WTC11 (cell line): ENCODE measurements at regions of chr6 and their contacts with region 1.

Region 1: DNA sequence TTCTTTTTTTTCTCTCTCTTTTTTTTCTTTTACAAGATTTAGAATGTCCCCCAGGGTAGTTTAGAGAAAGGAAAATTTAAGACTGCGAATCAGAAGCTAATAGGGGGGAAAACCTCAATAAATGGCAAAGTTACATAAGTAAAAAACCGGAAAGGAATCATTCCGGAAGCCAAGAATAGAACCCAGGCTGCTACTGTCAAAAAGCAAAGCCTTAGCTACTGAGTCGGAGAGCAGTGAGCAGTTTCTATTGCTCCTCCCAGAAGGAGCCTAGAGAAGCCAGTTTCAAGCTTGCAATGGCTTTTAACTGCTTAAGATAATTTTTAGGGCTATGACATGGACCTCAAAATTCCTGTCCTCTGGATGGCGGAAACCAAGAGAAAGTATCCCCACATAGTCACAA is 31.6 kb downstream of the SAMD5 start:
- DNase-seq: no peak
- ATAC-seq: no peak
- H3K4me3 Mint-ChIP-seq: no peak overlapping the region
- H3K27ac Mint-ChIP-seq: no peak overlapping the region
- H3K4me1 Mint-ChIP-seq: no peaks in the 10 kb centered on the region
- H3K27me3 Mint-ChIP-seq: peaks cover 3% of the 10 kb centered on the region; the same call in 1 of the 2 replicates
- CTCF ChIP-seq: no peak

Region 2: DNA sequence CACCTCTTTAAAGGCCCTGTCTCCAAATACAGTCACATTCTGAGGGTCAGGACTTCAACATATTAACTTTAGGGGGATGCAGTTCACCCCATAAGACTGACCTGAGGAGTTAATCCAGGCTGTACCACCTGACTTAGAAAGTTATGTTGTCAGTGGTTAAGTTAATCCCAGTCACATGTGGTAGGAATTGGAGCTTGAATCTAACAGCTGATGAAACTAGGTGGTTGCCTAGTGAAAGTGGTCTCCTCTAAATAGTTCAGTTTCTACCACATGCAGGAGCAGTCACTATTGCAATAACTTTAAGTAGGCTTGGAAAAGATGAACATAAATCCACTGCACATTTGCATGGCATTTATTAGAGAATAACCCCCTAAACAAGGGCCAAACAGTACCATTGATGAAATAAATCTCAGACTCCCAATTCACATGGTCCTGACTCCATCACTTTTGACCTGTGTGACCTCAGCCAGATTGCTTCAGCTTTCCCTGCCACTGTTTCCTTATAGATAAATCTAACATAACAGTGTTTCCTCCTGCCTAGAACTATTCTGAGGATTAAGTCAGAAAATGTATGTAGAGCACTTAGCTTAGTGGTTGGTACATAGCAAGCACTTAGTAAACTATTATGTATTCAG is 11.4 kb before region 1 on chr6:
- CTCF ChIA-PET with region 1: no interaction called
- POLR2A ChIA-PET with region 1: no interaction called
- DNase-seq: no peak
- ATAC-seq: no peak
- H3K4me3 Mint-ChIP-seq: no peak overlapping the region
- H3K27ac Mint-ChIP-seq: no peak overlapping the region
- H3K4me1 Mint-ChIP-seq: peaks cover 3% of the 10 kb centered on the region; the same call in 1 of the 2 replicates
- H3K27me3 Mint-ChIP-seq: no peaks in the 10 kb centered on the region
- CTCF ChIP-seq: no peak

Region 3: DNA sequence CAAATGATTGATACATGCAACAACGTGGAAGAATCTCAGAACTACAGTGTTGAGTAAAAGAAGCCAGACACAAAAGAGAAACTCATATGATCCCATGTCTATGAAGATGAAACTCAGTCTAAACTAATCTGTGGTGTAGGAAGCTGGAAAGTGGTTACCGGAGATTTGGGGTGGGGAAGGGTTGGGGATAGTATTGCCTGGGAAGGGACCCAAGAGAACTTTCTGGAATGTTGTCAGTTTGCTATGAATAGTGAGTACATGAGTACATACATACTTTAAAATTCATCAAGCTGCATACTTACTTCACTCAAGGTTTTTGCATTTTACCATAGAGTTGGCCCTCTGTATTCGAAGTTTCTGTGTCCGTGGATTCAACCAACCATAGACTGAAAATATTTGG is 74.4 kb after region 1 on chr6:
- CTCF ChIA-PET with region 1: no interaction called
- POLR2A ChIA-PET with region 1: interaction called, 11 read pairs
- DNase-seq: no peak
- ATAC-seq: no peak
- H3K4me3 Mint-ChIP-seq: no peak overlapping the region
- H3K27ac Mint-ChIP-seq: no peak overlapping the region
- H3K4me1 Mint-ChIP-seq: no peaks in the 10 kb centered on the region; the same call in 1 of the 2 replicates
- H3K27me3 Mint-ChIP-seq: no peaks in the 10 kb centered on the region
- CTCF ChIP-seq: no peak